ENCODE measurements at regions of chr6 and their contacts with region 1.

Region 1: GRCh38 chr6:42104095-42104806 is 38.2 kb downstream of the C6orf132 start:
- DNase-seq: peak; percentile 39 to 79 (median 73)
- ATAC-seq: peak; percentile 90
- H3K4me3 ChIP-seq: peak overlapping the region; percentile 68
- H3K4me3 Mint-ChIP-seq: peak overlapping the region; percentile 66 to 89 (median 70)
- H3K27ac ChIP-seq: peak overlapping the region; percentile 41
- H3K27ac Mint-ChIP-seq: peak overlapping the region in 5 of 9 donors; percentile 20 to 78 (median 58)
- H3K4me1 ChIP-seq: peaks cover 0 to 4% of the 10 kb centered on the region in 2 donors
- H3K4me1 Mint-ChIP-seq: peaks cover 0 to 28% (median 9%) of the 10 kb centered on the region in 7 donors
- H3K27me3 ChIP-seq: no peaks in the 10 kb centered on the region
- H3K27me3 Mint-ChIP-seq: no peaks in the 10 kb centered on the region

Region 2: DNA sequence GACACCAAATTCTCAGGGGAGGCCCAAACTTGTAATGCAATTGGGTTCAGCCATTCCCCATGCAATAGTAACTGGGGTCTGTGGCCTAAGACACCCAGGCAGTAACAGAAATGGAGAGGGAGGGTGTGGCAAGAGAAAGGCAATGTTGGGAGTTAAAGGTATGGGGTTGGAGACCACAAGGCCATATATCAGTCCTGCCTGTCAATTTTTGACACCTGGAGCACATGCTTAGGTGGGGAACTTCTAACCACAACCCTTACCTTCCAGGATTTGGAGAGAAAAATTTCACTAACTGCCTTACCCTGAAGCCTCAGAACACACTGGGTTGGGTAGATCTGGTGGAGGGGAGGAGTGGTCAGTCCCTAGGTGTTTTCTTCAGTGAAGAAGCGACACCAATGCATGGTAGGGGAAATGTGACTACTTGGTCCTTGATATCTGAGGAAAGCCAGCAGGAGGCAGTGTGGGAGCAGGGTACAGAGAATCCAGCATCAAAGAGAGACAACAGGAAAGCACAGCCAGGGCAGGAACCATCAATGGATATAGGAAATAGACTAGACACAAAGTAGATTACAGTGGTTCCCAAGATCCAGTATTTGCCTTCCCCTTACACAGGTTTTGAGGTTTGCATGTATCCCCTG is 202.2 kb before region 1 on chr6:
- CTCF ChIA-PET with region 1: interaction called, 8 read pairs
- POLR2A ChIA-PET with region 1: interaction called, 3 read pairs
- intact Hi-C with region 1: loop called in 1 of 2 experiments (anchors 1 kb)
- DNase-seq: peak in 8 of 9 donors; percentile 42 to 66 (median 52)
- ATAC-seq: peak; percentile 78
- H3K4me3 ChIP-seq: no peak overlapping the region
- H3K4me3 Mint-ChIP-seq: no peak overlapping the region
- H3K27ac ChIP-seq: no peak overlapping the region
- H3K27ac Mint-ChIP-seq: peak overlapping the region in 7 of 9 donors; percentile 5 to 61 (median 14)
- H3K4me1 ChIP-seq: peaks cover 0 to 7% of the 10 kb centered on the region in 2 donors
- H3K4me1 Mint-ChIP-seq: peaks cover 8 to 27% (median 23%) of the 10 kb centered on the region in 7 donors
- H3K27me3 ChIP-seq: no peaks in the 10 kb centered on the region
- H3K27me3 Mint-ChIP-seq: no peaks in the 10 kb centered on the region

Region 3: GRCh38 chr6:42075159-42075838 is 29.0 kb before region 1 on chr6:
- CTCF ChIA-PET with region 1: interaction called, 6 read pairs
- POLR2A ChIA-PET with region 1: no interaction called
- intact Hi-C with region 1: loop called (anchors 1 to 2 kb)
- DNase-seq: peak in 8 of 9 donors; percentile 30 to 69 (median 36)
- ATAC-seq: no peak
- H3K4me3 ChIP-seq: no peak overlapping the region
- H3K4me3 Mint-ChIP-seq: no peak overlapping the region
- H3K27ac ChIP-seq: no peak overlapping the region
- H3K27ac Mint-ChIP-seq: peak overlapping the region in 6 of 9 donors; percentile 17 to 69 (median 52)
- H3K4me1 ChIP-seq: no peaks in the 10 kb centered on the region
- H3K4me1 Mint-ChIP-seq: peaks cover 0 to 12% (median 4%) of the 10 kb centered on the region in 7 donors
- H3K27me3 ChIP-seq: no peaks in the 10 kb centered on the region
- H3K27me3 Mint-ChIP-seq: no peaks in the 10 kb centered on the region

Region 4: DNA sequence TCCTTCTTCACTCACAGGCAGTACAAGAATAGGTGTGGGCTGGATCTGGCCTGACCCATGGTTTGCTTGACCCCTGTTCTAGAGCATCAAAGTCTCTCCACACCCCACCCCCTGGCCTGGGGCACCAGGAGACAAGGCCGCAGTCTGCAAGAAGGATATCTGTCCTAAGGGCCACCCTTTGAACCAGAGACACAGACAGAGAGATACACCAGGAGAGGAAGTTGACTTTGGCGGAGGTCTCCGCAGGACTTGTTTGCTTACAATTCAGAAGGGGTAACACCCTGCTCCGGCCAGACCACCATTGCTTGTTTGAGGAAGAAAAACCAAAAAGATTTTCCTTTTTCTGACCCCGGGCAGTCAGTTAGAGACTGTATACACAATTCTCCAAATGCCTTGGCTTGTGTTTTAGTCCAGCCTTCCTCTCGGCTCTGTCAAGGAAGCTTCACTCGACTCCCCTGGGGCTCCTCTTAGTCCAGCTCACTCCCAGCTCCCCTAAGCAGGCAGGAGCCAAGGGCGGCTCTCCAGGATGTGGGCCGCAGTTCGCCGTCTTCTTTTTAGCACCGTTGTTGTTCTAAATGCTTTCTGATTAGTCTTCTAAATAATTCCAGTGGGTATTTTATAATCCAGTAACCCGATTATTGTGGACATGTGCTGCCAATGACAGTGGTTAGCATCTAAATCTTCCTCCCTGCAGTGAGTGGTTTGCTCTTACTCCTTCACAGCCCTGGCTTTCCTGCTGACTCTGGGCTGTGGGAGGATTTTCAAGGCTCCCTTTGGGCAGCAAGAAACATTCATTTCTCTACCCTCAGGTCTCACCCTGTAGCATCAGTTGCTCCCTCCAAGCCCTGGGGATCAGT is 172.0 kb after region 1 on chr6:
- CTCF ChIA-PET with region 1: no interaction called
- POLR2A ChIA-PET with region 1: no interaction called
- intact Hi-C with region 1: no loop called
- DNase-seq: no peak
- ATAC-seq: no peak
- H3K4me3 ChIP-seq: no peak overlapping the region
- H3K4me3 Mint-ChIP-seq: no peak overlapping the region
- H3K27ac ChIP-seq: no peak overlapping the region
- H3K27ac Mint-ChIP-seq: peak overlapping the region in 4 of 9 donors; percentile 31 to 69 (median 60)
- H3K4me1 ChIP-seq: peaks cover 35% of the 10 kb centered on the region in 2 donors
- H3K4me1 Mint-ChIP-seq: peaks cover 28 to 51% (median 40%) of the 10 kb centered on the region in 7 donors
- H3K27me3 ChIP-seq: no peaks in the 10 kb centered on the region
- H3K27me3 Mint-ChIP-seq: no peaks in the 10 kb centered on the region

Measured in naive thymus-derived CD4-positive, alpha-beta T cell (primary cell).